CD8-positive, alpha-beta T cell (primary cell): ENCODE measurements at regions of chr15 and their contacts with region 1.

Region 1: DNA sequence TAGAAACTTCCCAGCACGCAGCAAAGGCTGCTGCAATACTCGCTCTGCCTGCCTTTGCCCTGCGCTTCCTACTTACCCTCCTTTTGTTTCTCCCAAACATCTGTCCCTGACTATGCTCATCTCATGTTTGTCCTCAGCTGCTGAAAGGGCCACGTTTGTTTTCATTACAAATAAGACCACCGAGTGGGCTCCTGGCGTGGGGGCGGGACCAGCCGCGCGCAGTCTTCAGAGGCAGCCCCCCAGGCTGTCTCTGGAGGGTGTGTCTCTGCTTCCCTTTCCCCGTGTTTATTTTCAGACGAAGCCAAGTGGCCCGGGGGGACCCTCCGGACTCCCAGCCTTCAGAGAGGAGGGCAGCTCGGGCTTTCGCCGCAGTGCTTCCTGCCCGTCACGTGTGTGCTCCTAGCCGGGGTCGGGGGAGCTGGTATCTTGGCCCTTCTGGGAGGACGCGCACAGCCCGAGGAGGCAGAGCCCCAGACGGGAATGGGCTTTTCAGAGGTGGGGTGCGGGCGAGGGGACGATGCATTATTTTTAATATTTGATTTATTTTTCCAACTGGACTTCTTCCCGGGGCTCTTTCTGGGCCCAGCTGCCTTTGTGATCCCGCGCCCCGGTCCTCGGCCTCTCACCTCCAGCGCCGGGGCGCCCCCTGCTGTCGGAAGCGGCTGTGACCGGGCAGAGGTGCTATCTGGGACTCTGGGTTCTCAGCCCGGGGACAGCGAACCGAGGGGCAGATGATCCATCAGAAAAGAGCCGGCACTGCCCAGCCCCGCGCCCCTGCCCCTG is 70.0 kb upstream of the CGNL1 start:
- DNase-seq: peak; percentile 64 to 90 (median 78)
- ATAC-seq: peak; percentile 75
- H3K4me3 ChIP-seq: peak overlapping the region; percentile 46 to 49
- H3K4me3 Mint-ChIP-seq: peak overlapping the region; percentile 67
- H3K27ac ChIP-seq: no peak overlapping the region
- H3K27ac Mint-ChIP-seq: no peak overlapping the region
- H3K4me1 ChIP-seq: no peaks in the 10 kb centered on the region
- H3K4me1 Mint-ChIP-seq: peaks cover 4% of the 10 kb centered on the region
- H3K27me3 ChIP-seq: peaks cover 0 to 4% of the 10 kb centered on the region in 2 experiments
- H3K27me3 Mint-ChIP-seq: peaks cover 9% of the 10 kb centered on the region
- CTCF ChIP-seq: peak; percentile 83

Region 2: GRCh38 chr15:56491110-56491722 is 815.1 kb before region 1 on chr15:
- CTCF ChIA-PET with region 1: interaction called, 21 read pairs
- POLR2A ChIA-PET with region 1: no interaction called
- intact Hi-C with region 1: loop called (anchors 1 kb)
- DNase-seq: peak; percentile 19 to 70 (median 43)
- ATAC-seq: no peak
- H3K4me3 ChIP-seq: no peak overlapping the region
- H3K4me3 Mint-ChIP-seq: no peak overlapping the region
- H3K27ac ChIP-seq: no peak overlapping the region
- H3K27ac Mint-ChIP-seq: no peak overlapping the region
- H3K4me1 ChIP-seq: no peaks in the 10 kb centered on the region
- H3K4me1 Mint-ChIP-seq: no peaks in the 10 kb centered on the region
- H3K27me3 ChIP-seq: peaks cover 0 to 3% of the 10 kb centered on the region in 2 experiments
- H3K27me3 Mint-ChIP-seq: no peaks in the 10 kb centered on the region
- CTCF ChIP-seq: peak; percentile 66

Region 3: DNA sequence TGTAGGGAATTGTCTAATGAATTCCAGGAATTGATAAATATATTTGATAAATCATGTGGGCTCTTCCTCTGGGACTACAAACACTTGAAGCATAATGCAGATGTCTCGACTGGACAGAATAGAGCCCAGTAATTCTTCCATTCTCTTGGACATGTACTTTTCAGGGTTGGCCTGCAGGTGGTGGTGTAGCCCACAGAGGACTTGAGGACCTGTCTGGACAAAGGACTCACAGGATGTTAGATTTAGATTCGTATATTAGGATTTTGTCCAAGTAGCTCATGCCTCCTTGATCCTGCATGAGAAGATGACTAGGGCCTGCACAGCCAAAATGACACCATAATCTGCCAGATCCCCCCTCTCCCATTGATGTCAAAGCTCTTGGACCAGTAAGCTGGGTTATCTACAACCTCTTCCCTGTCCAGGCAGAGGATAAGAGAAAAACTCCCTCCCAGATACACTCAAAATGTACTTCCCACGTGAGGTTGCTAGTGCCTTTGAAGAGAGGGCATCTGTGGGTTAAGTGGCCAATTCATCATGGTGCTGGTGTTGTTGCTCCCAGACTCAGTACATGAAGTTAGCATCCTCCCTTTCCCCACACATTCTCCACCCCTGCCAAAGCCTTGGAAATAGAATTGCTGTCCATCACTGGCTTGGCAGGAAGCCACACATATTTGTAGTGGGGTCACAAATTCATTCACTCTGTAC is 484.5 kb before region 1 on chr15:
- CTCF ChIA-PET with region 1: interaction called, 18 read pairs
- POLR2A ChIA-PET with region 1: no interaction called
- intact Hi-C with region 1: loop called (anchors 1 to 10 kb)
- DNase-seq: peak; percentile 4 to 71 (median 36)
- ATAC-seq: no peak
- H3K4me3 ChIP-seq: no peak overlapping the region
- H3K4me3 Mint-ChIP-seq: no peak overlapping the region
- H3K27ac ChIP-seq: no peak overlapping the region
- H3K27ac Mint-ChIP-seq: no peak overlapping the region
- H3K4me1 ChIP-seq: no peaks in the 10 kb centered on the region
- H3K4me1 Mint-ChIP-seq: no peaks in the 10 kb centered on the region
- H3K27me3 ChIP-seq: no peaks in the 10 kb centered on the region
- H3K27me3 Mint-ChIP-seq: peaks cover 2% of the 10 kb centered on the region
- CTCF ChIP-seq: no peak

Region 4: GRCh38 chr15:57146506-57147201 is 159.7 kb before region 1 on chr15:
- CTCF ChIA-PET with region 1: interaction called, 32 read pairs
- POLR2A ChIA-PET with region 1: no interaction called
- intact Hi-C with region 1: loop called (anchors 1 kb)
- DNase-seq: peak in 2 of 9 experiments; percentile 36 to 51
- ATAC-seq: no peak
- H3K4me3 ChIP-seq: no peak overlapping the region
- H3K4me3 Mint-ChIP-seq: no peak overlapping the region
- H3K27ac ChIP-seq: no peak overlapping the region
- H3K27ac Mint-ChIP-seq: no peak overlapping the region
- H3K4me1 ChIP-seq: no peaks in the 10 kb centered on the region
- H3K4me1 Mint-ChIP-seq: peaks cover 4% of the 10 kb centered on the region
- H3K27me3 ChIP-seq: no peaks in the 10 kb centered on the region
- H3K27me3 Mint-ChIP-seq: no peaks in the 10 kb centered on the region
- CTCF ChIP-seq: peak; percentile 65

Region 5: DNA sequence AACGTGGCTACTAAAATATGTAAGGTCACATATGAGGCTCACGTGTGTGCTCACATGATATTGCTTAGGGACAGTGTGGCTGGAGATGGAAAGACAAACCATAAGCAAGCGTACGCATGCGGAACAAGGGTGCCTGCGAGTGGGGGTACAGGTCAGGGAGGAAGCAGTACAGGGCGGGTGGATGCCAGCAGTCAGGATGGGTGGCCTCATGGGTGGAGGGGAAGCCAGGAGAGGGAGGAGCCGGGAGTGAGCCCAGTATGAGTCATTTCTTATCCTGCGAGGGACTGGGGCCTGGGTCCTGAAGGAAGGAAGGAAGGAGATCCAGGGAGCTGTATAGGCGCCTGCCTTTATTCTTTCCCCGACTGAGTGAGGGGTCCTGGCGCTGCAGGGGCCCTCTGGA is 27.9 kb after region 1 on chr15:
- CTCF ChIA-PET with region 1: no interaction called
- POLR2A ChIA-PET with region 1: no interaction called
- intact Hi-C with region 1: no loop called
- DNase-seq: no peak
- ATAC-seq: no peak
- H3K4me3 ChIP-seq: no peak overlapping the region
- H3K4me3 Mint-ChIP-seq: no peak overlapping the region
- H3K27ac ChIP-seq: no peak overlapping the region
- H3K27ac Mint-ChIP-seq: no peak overlapping the region
- H3K4me1 ChIP-seq: no peaks in the 10 kb centered on the region
- H3K4me1 Mint-ChIP-seq: peaks cover 3% of the 10 kb centered on the region
- H3K27me3 ChIP-seq: no peaks in the 10 kb centered on the region
- H3K27me3 Mint-ChIP-seq: peaks cover 11% of the 10 kb centered on the region
- CTCF ChIP-seq: no peak

Region 6: DNA sequence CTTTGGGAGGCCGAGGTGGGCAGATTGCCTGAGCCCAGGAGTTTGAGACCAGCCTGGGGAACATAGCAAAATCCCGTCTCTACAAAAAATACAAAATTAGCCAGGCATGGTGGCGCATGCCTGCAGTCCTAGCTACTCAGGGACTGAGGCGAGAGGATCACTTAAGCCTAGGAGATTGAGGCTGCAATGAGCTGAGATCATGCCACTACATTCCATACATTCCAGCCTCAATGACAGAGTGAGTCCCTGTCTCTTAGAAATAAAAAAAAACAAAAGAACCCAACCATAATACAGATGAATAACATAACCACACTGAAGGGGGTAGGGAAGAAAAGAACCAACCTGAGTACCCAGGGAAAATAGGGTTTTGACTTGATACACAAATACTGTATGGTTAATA is 50.3 kb after region 1 on chr15:
- CTCF ChIA-PET with region 1: no interaction called
- POLR2A ChIA-PET with region 1: no interaction called
- intact Hi-C with region 1: no loop called
- DNase-seq: no peak
- ATAC-seq: no peak
- H3K4me3 ChIP-seq: no peak overlapping the region
- H3K4me3 Mint-ChIP-seq: no peak overlapping the region
- H3K27ac ChIP-seq: no peak overlapping the region
- H3K27ac Mint-ChIP-seq: no peak overlapping the region
- H3K4me1 ChIP-seq: no peaks in the 10 kb centered on the region
- H3K4me1 Mint-ChIP-seq: no peaks in the 10 kb centered on the region
- H3K27me3 ChIP-seq: no peaks in the 10 kb centered on the region
- H3K27me3 Mint-ChIP-seq: peaks cover 9% of the 10 kb centered on the region
- CTCF ChIP-seq: no peak

Region 7: GRCh38 chr15:57375827-57376695 is 69.7 kb after region 1 on chr15 and contains the start of gene CGNL1:
- CTCF ChIA-PET with region 1: no interaction called
- POLR2A ChIA-PET with region 1: no interaction called
- intact Hi-C with region 1: no loop called
- DNase-seq: no peak
- ATAC-seq: no peak
- H3K4me3 ChIP-seq: no peak within 1 kb of the TSS
- H3K4me3 Mint-ChIP-seq: peak within 1 kb of the TSS; percentile 62
- H3K27ac ChIP-seq: no peak within 1 kb of the TSS
- H3K27ac Mint-ChIP-seq: no peak within 1 kb of the TSS
- H3K4me1 ChIP-seq: no peaks in the 10 kb centered on the region
- H3K4me1 Mint-ChIP-seq: peaks cover 11% of the 10 kb centered on the region
- H3K27me3 ChIP-seq: peaks cover 10 to 19% of the 10 kb centered on the region in 2 experiments
- H3K27me3 Mint-ChIP-seq: peaks cover 50% of the 10 kb centered on the region
- CTCF ChIP-seq: no peak
- total RNA-seq, gene CGNL1: not detected